ENCODE measurements at regions of chr2 and their contacts with region 1.

Region 1: DNA sequence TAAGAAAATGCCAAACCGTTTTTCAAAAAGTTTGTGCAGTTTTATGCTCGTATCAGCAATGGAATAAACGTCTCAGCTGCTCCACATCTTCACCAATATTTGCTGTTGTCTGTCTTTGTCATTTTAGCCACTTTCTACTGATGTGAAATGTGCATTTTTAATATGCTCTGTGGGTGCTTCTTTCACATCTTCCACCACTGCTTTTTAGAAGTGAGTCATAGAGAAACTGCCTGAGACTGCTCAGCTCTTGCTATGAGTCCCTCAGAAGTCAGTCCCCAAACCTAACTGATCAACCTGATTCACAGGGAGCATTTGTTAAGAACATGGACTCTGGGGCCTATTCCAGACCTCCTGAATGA is 41.0 kb upstream of the EPC2 start:
- DNase-seq: peak; percentile 40
- H3K4me3 Mint-ChIP-seq: no peak overlapping the region
- H3K27ac Mint-ChIP-seq: peak overlapping the region; percentile 96
- H3K4me1 Mint-ChIP-seq: peaks cover 29% of the 10 kb centered on the region
- H3K27me3 Mint-ChIP-seq: peaks cover 13% of the 10 kb centered on the region

Region 2: GRCh38 chr2:147843864-147844696 is 759.5 kb before region 1 on chr2:
- intact Hi-C with region 1: loop called (anchors 1 kb)
- DNase-seq: peak; percentile 85
- H3K4me3 Mint-ChIP-seq: peak overlapping the region; percentile 95
- H3K27ac Mint-ChIP-seq: peak overlapping the region; percentile 84
- H3K4me1 Mint-ChIP-seq: peaks cover 35% of the 10 kb centered on the region
- H3K27me3 Mint-ChIP-seq: peaks cover 52% of the 10 kb centered on the region

Region 3: GRCh38 chr2:148509288-148509902 is 94.1 kb before region 1 on chr2:
- intact Hi-C with region 1: loop called (anchors 1 kb)
- DNase-seq: peak; percentile 77
- H3K4me3 Mint-ChIP-seq: peak overlapping the region; percentile 61
- H3K27ac Mint-ChIP-seq: peak overlapping the region; percentile 79
- H3K4me1 Mint-ChIP-seq: peaks cover 40% of the 10 kb centered on the region
- H3K27me3 Mint-ChIP-seq: peaks cover 2% of the 10 kb centered on the region

Region 4: GRCh38 chr2:148546270-148546669 is 57.3 kb before region 1 on chr2:
- intact Hi-C with region 1: no loop called
- DNase-seq: no peak
- H3K4me3 Mint-ChIP-seq: peak overlapping the region; percentile 67
- H3K27ac Mint-ChIP-seq: peak overlapping the region; percentile 97
- H3K4me1 Mint-ChIP-seq: peaks cover 55% of the 10 kb centered on the region
- H3K27me3 Mint-ChIP-seq: no peaks in the 10 kb centered on the region

Region 5: GRCh38 chr2:148565272-148565894 is 38.2 kb before region 1 on chr2:
- intact Hi-C with region 1: no loop called
- DNase-seq: no peak
- H3K4me3 Mint-ChIP-seq: no peak overlapping the region
- H3K27ac Mint-ChIP-seq: no peak overlapping the region
- H3K4me1 Mint-ChIP-seq: peaks cover 22% of the 10 kb centered on the region
- H3K27me3 Mint-ChIP-seq: peaks cover 5% of the 10 kb centered on the region

Region 6: GRCh38 chr2:148590612-148591011 is 12.9 kb before region 1 on chr2:
- intact Hi-C with region 1: loop called (anchors 1 kb)
- DNase-seq: no peak
- H3K4me3 Mint-ChIP-seq: no peak overlapping the region
- H3K27ac Mint-ChIP-seq: no peak overlapping the region
- H3K4me1 Mint-ChIP-seq: no peaks in the 10 kb centered on the region
- H3K27me3 Mint-ChIP-seq: peaks cover 9% of the 10 kb centered on the region

Region 7: DNA sequence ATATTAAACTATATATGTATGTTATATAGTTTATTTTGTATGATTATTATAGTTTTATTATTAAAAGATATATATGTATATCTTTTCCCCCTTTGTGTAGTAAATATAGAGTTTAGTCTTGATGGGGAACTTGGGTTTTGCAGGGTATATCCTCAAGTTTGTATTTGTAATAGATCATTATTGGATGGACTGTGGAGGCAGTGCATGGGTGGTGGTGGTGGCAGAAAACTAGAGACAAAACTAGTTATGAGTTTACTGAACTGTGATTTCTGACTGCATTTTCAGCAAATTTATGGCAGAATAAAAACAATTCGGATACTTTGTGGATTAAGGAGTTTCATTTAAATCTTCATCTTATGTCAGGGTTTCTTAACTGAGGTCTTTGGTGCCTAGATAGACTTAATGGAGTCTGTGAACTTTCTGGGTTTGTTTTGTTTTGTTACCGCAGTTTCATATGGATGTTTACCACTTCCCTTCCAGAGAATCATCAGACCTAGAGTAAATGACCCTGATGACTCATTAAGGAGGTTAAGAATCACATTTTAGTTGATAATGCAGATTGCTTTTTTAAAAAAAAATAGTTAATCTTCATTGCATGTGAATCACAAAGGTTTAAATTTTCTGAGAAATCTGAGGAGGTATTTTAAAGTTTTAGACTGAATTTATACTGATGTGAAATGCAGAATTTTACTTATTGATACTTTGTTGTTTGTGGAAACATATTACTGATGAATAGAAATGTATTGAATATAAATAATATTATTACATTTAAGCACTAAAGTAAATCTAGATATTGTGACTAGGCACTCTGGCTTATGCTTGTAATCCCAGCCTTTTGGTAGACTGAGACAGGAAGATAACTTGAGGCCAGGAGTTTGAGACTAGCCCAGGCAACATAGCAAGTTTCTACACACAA is 55.5 kb after region 1 on chr2:
- intact Hi-C with region 1: loop called (anchors 1 kb)
- DNase-seq: no peak
- H3K4me3 Mint-ChIP-seq: peak overlapping the region; percentile 25
- H3K27ac Mint-ChIP-seq: peak overlapping the region; percentile 49
- H3K4me1 Mint-ChIP-seq: peaks cover 66% of the 10 kb centered on the region
- H3K27me3 Mint-ChIP-seq: no peaks in the 10 kb centered on the region

Region 8: GRCh38 chr2:148874868-148875341 is 271.4 kb after region 1 on chr2 and contains the start of gene KIF5C:
- intact Hi-C with region 1: loop called (anchors 2 kb)
- DNase-seq: peak; percentile 77
- H3K4me3 Mint-ChIP-seq: peak within 1 kb of the TSS; percentile 91
- H3K27ac Mint-ChIP-seq: peak within 1 kb of the TSS; percentile 83
- H3K4me1 Mint-ChIP-seq: peaks cover 19% of the 10 kb centered on the region
- H3K27me3 Mint-ChIP-seq: peaks cover 18% of the 10 kb centered on the region
- total RNA-seq, gene KIF5C: 17.9 and 20.7 TPM in 2 replicates

Region 9: DNA sequence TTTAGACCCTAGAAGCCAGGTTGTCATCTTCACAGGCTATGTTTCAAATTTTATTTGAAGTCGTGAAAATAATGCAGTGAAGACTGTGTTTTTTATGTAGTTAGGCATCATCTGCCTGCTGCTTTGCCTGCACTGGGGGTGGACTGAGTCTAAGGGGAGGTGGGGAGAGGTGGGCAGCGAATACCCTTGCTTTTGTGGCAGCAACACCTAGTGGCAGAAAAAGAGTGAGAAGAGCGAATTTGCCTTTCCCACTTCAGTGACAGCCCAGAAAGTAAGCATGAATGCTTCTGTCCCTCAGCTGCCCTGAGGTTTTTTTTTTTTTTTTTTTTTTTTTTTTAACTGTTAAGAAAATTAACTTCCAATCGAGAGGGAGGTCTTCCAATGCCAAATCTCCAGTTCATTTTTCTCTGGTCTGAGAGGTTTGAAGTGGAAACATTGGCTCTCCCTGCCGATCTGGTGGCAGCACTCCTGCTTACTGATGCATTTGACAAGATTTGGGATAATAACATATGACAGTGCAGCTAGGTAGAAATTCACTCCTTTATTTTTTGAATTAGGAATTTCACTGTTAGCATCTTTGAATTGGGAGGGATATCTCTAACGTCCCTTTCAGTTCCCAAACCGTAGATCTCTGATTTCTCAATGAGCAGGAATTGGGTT is 374.6 kb after region 1 on chr2:
- intact Hi-C with region 1: no loop called
- DNase-seq: no peak
- H3K4me3 Mint-ChIP-seq: no peak overlapping the region
- H3K27ac Mint-ChIP-seq: no peak overlapping the region
- H3K4me1 Mint-ChIP-seq: peaks cover 4% of the 10 kb centered on the region
- H3K27me3 Mint-ChIP-seq: no peaks in the 10 kb centered on the region

Region 10: GRCh38 chr2:149068996-149069888 is 465.7 kb after region 1 on chr2:
- intact Hi-C with region 1: loop called (anchors 1 kb)
- DNase-seq: no peak
- H3K4me3 Mint-ChIP-seq: peak overlapping the region; percentile 1
- H3K27ac Mint-ChIP-seq: peak overlapping the region; percentile 74
- H3K4me1 Mint-ChIP-seq: peaks cover 19% of the 10 kb centered on the region
- H3K27me3 Mint-ChIP-seq: peaks cover 14% of the 10 kb centered on the region

Measured in activated T-helper 1 cell treated with anti-CD3 and anti-CD28 coated beads, Interleukin-12 subunit alpha, Interleukin-12 subunit beta, Interleukin-2, Interleukin-4 antibody, amounts not matched to agents 30 ng/mL and 10 ng/mL and 1 ng/mL, durations not matched to agents 14 hours and 24 hours and 36 hours (primary cell).